Activated CD4-positive, alpha-beta T cell treated with anti-CD3 and anti-CD28 coated beads, Interleukin-2, amount 10 ng/mL, durations not matched to agents 7 days and 5 days (primary cell): ENCODE measurements at regions of chr11 and their contacts with region 1.

Region 1: DNA sequence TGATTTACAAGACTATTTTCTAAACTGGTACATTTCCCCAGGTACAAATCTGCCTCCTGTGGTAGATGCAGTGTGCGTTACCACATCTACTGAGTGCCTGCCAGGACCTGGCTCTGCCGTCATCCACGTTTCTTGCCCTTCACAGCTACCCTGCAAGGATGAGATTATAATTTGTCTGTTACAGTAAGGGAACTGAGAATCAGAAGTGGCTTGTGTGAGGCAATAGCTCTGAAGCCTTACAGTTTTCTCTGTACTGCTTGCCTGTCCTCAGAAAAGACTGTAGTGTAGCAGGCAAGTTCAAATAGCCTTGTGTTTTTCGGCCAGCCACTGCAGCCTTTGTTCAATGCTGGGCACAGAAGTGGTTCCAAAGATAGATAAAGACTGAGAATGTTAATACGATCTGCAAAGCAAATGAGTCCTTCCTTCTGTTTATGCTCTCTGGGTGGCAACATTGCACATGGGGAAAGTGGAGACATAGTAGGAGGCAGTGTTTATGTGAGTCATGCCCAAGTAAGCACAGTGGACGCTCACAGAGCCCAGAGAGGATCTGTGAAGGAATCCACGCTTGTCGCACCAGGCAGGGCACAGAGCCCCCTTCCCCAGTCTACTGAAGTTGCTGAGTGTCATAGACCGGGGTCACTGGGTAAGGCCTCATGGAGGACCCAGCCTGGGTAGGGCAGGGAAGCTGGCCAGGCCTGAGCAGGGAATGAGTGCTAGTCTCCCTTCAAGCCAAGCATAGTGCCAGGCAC is 49.1 kb downstream of the MICAL2 start:
- DNase-seq: no peak
- H3K4me3 Mint-ChIP-seq: no peak overlapping the region
- H3K27ac Mint-ChIP-seq: no peak overlapping the region
- H3K4me1 Mint-ChIP-seq: peaks cover 66% of the 10 kb centered on the region
- H3K27me3 Mint-ChIP-seq: no peaks in the 10 kb centered on the region

Region 2: DNA sequence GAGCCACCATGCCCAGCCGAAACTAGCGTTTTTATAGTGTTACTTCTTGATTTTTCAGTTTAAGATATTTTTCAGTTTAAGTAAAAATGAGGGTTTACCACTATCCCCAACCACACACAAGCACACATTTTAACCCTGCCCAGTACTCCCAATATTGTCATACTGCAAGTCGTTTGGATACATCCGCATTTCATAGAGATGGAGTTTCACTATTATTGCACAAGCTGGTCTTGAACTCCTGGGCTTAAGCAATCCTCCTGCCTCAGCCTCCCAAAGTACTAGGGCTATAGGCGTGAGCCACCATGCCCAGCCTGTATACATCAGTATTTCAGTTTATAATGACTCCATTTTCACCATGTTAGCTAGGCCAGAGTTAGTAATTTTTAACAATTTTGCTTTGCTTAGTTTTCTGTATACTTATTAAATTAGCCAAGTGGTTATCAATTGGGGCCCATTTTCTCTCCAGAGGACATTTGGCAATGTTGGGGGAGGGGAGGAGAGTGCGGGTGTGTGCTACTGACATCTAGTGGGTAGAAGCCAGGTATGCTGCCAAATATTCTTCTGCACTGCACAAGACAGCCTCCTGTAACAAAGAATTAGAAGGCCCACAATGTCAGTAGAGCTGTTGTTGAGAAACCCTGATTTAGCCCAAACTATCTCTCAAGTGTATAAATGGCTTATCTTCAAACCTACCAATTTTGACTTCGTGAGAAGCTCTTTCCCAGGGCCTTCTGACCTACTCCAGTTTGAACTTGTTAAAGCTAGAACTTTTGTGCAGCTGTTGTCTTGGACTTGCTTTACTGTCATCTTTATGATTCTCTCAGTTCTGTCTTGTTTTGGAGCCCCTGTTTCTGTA is 310.4 kb before region 1 on chr11:
- CTCF ChIA-PET with region 1: no interaction called
- POLR2A ChIA-PET with region 1: no interaction called
- DNase-seq: peak; percentile 78
- H3K4me3 Mint-ChIP-seq: no peak overlapping the region
- H3K27ac Mint-ChIP-seq: peak overlapping the region; percentile 57
- H3K4me1 Mint-ChIP-seq: peaks cover 69% of the 10 kb centered on the region
- H3K27me3 Mint-ChIP-seq: no peaks in the 10 kb centered on the region

Region 3: GRCh38 chr11:12143461-12144258 is 15.9 kb before region 1 on chr11:
- CTCF ChIA-PET with region 1: interaction called, 10 read pairs
- POLR2A ChIA-PET with region 1: no interaction called
- DNase-seq: no peak
- H3K4me3 Mint-ChIP-seq: peak overlapping the region; percentile 21
- H3K27ac Mint-ChIP-seq: peak overlapping the region; percentile 82
- H3K4me1 Mint-ChIP-seq: peaks cover 71% of the 10 kb centered on the region
- H3K27me3 Mint-ChIP-seq: no peaks in the 10 kb centered on the region

Region 4: DNA sequence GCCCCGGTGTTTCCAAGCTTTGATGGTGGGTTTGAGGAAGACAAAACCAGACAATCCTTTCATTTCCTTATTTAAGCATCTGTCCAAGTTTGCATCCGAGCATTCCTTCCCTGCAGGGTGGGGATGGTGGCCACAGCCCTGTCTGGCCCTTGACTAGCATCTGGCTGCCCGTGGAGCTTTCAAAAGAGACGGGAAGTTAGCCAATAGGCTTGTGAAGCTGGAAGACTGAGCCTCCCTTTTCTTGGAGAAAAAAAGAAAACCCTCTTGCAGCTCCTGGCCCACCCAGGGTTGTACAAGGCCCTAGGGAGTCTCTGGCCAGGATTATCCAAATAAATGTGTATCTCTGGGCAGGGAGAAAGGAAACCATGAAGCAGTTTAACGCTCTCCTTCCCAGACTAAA is 11.5 kb after region 1 on chr11:
- CTCF ChIA-PET with region 1: interaction called, 12 read pairs
- POLR2A ChIA-PET with region 1: interaction called, 5 read pairs
- DNase-seq: no peak
- H3K4me3 Mint-ChIP-seq: no peak overlapping the region
- H3K27ac Mint-ChIP-seq: no peak overlapping the region
- H3K4me1 Mint-ChIP-seq: peaks cover 52% of the 10 kb centered on the region
- H3K27me3 Mint-ChIP-seq: no peaks in the 10 kb centered on the region

Region 5: GRCh38 chr11:12235947-12236743 is 76.6 kb after region 1 on chr11:
- CTCF ChIA-PET with region 1: interaction called, 20 read pairs
- POLR2A ChIA-PET with region 1: no interaction called
- DNase-seq: peak; percentile 75
- H3K4me3 Mint-ChIP-seq: peak overlapping the region; percentile 56
- H3K27ac Mint-ChIP-seq: peak overlapping the region; percentile 95
- H3K4me1 Mint-ChIP-seq: peaks cover 38% of the 10 kb centered on the region
- H3K27me3 Mint-ChIP-seq: no peaks in the 10 kb centered on the region

Region 6: DNA sequence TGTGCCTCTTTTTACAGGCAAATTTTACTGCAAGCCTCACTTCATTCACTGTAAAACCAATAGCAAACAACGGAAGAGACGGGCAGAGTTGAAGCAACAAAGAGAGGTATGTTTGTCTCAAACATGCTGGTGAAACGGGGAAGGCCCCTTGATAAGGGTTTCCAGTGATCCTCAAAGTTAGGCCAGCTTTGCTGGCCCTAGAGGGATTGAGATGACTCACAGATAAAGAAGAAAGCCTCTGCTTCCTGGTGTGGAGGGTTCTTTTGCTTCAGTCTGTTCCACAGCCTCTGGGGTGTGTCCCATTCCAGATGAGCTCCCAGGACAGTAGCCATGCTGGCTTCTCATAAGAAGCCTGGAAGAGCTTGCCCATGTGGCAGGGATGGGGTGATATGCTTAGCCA is 98.9 kb after region 1 on chr11:
- CTCF ChIA-PET with region 1: no interaction called
- POLR2A ChIA-PET with region 1: no interaction called
- DNase-seq: no peak
- H3K4me3 Mint-ChIP-seq: no peak overlapping the region
- H3K27ac Mint-ChIP-seq: no peak overlapping the region
- H3K4me1 Mint-ChIP-seq: no peaks in the 10 kb centered on the region
- H3K27me3 Mint-ChIP-seq: no peaks in the 10 kb centered on the region